Activated T-helper 1 cell treated with anti-CD3 and anti-CD28 coated beads, Interleukin-12 subunit alpha, Interleukin-12 subunit beta, Interleukin-2, Interleukin-4 antibody, amounts not matched to agents 30 ng/mL and 10 ng/mL and 1 ng/mL, durations not matched to agents 14 hours and 24 hours and 36 hours (primary cell): ENCODE measurements at regions of chr12 and their contacts with region 1.

Region 1: DNA sequence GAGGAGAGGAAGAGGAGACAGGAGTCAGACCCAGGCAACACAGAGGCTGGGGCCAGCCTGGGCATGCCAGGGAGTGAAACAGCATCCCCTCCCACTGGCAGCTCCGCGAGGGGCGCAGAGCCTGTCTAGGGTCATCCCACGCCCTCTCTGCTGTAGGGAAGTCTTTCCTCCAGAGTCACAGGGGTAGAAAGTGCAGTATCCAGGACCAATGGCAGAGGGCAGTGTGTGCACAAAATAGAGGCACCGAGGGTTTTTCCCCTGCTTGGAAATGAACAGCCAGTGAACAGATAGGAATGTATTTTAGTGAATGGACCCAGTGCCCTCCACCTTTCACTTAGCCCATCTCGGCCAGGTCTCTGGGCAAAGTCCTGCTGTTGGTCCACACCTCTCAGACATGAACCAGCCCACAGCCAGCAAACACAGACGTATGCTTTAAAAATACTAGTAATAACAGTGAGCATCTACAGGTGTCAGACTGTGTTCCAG is 9.4 kb upstream of the KRT74 start:
- DNase-seq: peak; percentile 59
- H3K4me3 Mint-ChIP-seq: no peak overlapping the region
- H3K27ac Mint-ChIP-seq: no peak overlapping the region
- H3K4me1 Mint-ChIP-seq: peaks cover 33% of the 10 kb centered on the region
- H3K27me3 Mint-ChIP-seq: peaks cover 13% of the 10 kb centered on the region

Region 2: GRCh38 chr12:52156736-52157565 is 426.1 kb before region 1 on chr12:
- intact Hi-C with region 1: loop called (anchors 2 kb)
- DNase-seq: peak; percentile 67
- H3K4me3 Mint-ChIP-seq: no peak overlapping the region
- H3K27ac Mint-ChIP-seq: no peak overlapping the region
- H3K4me1 Mint-ChIP-seq: peaks cover 22% of the 10 kb centered on the region
- H3K27me3 Mint-ChIP-seq: no peaks in the 10 kb centered on the region

Region 3: DNA sequence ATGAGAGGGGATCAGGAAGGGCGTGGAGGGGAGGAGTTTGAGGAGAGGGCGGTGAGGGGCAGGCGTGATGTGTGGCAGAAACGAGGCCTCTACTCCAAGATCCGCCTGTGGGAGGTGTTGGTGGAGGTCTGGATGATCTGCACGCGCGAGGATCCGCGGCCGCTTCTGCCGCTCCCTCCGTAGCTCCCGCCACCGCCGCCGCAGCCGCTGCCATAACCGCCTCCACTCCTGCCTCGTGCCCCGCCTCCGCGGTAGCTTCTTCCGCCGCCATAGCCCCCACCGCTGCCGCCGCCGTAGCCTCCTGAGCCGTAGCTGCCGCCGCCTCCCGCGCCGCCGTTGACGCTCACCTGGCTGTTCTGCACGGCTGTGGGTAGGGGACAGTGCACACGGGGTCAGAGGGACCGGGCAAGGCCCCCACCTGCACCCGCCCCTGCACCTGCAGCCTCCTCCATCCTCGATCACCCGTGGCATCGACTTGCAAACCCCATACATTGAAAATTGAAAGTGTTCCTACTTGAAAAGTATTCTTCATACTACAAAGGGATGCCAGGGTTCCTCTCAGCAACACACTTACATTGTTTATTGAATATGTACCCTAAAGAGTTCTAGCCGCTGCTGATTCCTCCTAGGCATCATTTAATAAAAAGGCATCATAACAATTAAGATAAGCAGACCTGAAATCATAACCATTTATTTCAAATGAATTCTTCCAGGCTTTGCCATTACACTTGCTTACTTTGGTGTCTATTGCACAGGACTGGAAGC is 108.2 kb after region 1 on chr12:
- intact Hi-C with region 1: loop called (anchors 5 kb)
- DNase-seq: peak; percentile 28
- H3K4me3 Mint-ChIP-seq: peak overlapping the region; percentile 58
- H3K27ac Mint-ChIP-seq: no peak overlapping the region
- H3K4me1 Mint-ChIP-seq: peaks cover 14% of the 10 kb centered on the region
- H3K27me3 Mint-ChIP-seq: peaks cover 61% of the 10 kb centered on the region

Region 4: GRCh38 chr12:52870351-52871290 is 287.6 kb after region 1 on chr12:
- intact Hi-C with region 1: loop called (anchors 1 kb)
- DNase-seq: peak; percentile 60
- H3K4me3 Mint-ChIP-seq: no peak overlapping the region
- H3K27ac Mint-ChIP-seq: no peak overlapping the region
- H3K4me1 Mint-ChIP-seq: peaks cover 23% of the 10 kb centered on the region
- H3K27me3 Mint-ChIP-seq: peaks cover 14% of the 10 kb centered on the region

Region 5: DNA sequence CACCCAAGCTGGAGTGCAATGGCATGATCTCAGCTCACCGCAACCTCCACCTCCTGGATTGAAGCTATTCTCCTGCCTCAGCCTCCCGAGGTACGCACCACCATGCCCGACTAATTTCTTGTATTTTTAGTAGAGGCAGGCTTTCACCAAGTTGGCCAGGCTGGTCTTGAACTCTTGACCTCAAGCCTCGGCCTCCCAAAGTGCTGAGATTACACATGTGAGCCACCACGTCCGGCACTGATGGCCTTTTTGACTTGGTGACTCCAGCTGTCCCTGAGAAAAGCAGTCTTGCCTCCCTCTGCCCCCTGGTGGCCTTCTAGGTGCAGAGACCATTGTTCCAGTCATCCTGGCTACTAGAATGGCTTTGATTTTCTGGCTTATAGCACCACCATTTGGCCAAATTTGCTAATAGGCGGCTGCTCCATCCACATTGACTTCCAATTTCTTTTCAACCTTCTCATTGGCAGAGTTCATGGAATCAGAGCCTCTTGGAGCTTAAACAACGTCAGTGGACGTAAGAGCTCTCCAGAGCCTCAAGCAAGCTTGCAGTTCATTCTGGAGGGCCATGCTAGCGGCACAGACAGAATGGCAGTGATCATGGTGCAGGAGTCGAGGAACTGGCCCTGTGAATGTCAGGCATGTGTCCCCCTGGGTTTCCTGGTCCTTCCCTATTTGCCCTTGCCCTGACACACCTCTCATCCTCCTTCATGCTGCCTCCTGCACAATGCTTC is 397.8 kb after region 1 on chr12:
- intact Hi-C with region 1: loop called (anchors 1 kb)
- DNase-seq: peak; percentile 73
- H3K4me3 Mint-ChIP-seq: no peak overlapping the region
- H3K27ac Mint-ChIP-seq: no peak overlapping the region
- H3K4me1 Mint-ChIP-seq: no peaks in the 10 kb centered on the region
- H3K27me3 Mint-ChIP-seq: peaks cover 29% of the 10 kb centered on the region